ENCODE measurements at regions of chr10 and their contacts with region 1.

Region 1: DNA sequence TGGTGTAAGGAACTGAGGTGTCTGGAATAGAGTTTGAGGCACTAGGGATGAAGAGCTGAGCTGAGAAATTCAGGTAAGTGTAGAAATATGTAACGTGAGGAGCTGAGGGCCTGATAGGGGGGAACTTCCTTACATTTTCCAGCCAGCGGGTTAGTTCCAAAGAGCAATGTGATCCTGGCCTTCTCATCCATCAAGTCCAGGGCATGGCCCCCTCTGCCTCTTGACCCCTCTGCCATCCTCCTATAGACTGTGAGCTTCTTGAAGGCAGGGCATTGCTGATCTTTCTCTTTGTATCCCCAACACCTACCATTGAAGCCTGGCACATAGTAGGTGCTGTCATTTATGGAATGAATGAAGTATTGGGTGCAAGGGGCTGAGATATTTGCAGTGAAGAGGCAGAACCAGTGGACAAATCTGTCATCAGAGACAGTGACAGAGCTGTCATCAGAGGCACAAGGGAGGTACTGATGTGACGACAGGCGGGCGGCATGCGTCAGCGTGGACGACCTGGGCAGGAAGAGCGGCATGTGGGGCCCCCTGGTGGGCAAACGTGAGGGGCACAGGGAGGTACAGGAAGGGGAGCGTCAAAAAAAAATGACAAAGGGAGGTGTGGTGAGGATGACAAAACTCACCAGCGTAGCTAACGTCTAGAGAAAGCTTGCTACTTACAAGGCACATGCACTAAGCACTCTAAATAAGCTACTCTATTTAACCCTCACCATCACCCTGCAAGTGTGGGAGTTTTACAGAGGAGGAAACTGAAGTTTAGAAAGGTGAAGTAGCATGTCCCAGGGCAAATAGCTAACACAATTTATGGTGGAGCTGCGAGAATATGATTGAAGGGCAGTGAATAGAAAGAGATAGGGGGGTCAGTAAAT is 5.2 kb upstream of the CAMK2G start:
- DNase-seq: peak; percentile 89 to 98 (median 90)
- ATAC-seq: peak; percentile 96
- H3K4me3 ChIP-seq: no peak overlapping the region
- H3K27ac ChIP-seq: no peak overlapping the region
- H3K4me1 ChIP-seq: peaks cover 21 to 31% of the 10 kb centered on the region in 2 experiments; a peak in 4 of 5 replicates
- H3K27me3 ChIP-seq: no peaks in the 10 kb centered on the region
- CTCF ChIP-seq: peak; percentile 96 to 100 (median 99)
- EP300 ChIP-seq: peak; percentile 79
- POLR2A ChIP-seq: no peak
- RAD21 ChIP-seq: peak; percentile 98 to 99

Region 2: DNA sequence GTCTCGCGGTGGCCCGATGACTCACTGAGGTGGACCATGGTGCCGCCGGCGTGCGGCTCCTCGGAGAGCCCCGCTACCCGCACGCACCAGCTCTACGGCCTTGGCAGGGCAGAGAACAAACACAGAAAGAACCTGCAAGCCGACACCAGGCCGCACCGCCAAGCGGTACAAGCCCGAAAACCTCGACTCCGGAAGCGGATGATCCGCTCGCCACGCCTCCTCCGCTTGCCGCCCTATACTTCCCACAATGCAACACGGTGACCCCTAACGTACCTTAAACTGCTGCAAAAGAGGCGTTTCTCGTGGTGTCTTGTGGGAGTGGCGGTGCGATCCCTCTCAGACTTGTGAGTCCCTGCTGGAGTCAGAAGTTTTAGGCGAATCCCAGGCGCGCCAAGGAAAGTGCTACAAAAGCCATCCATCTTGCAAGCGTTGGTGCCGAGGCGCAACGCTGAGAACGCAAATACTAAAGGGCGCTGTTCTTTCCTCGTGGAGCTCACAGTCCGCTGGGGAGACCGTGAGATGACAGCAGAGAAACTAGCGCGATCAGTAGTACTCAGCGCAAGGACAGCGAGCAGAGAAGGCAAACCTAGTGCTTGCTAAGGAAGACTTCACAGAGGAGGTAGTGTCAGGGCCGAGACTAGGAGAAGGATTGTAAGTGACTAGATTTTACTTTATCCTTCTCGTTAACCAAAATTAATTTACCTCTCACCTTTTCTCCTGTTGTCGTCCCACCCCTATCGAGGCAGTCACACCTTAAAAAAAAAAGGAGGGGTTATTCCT is 626.9 kb before region 1 on chr10 and contains the start of gene MRPS16:
- CTCF ChIA-PET with region 1: no interaction called
- POLR2A ChIA-PET with region 1: no interaction called
- in situ Hi-C with region 1: loop called (anchors 5 kb)
- intact Hi-C with region 1: no loop called
- DNase-seq: peak; percentile 93 to 99 (median 95)
- ATAC-seq: peak; percentile 87
- H3K4me3 ChIP-seq: peak within 1 kb of the TSS; percentile 59
- H3K27ac ChIP-seq: peak within 1 kb of the TSS; percentile 89
- H3K4me1 ChIP-seq: peaks cover 7 to 28% of the 10 kb centered on the region in 2 experiments; a peak in 4 of 5 replicates
- H3K27me3 ChIP-seq: no peaks in the 10 kb centered on the region
- CTCF ChIP-seq: peak in 2 of 3 experiments; percentile 1 to 20; a peak in 2 of 6 replicates
- EP300 ChIP-seq: peak; percentile 52; the same call in 1 of the 2 replicates
- POLR2A ChIP-seq: peak; percentile 98
- RAD21 ChIP-seq: no peak
- polyA plus RNA-seq, gene MRPS16: 65.0 to 99.7 TPM

Region 3: DNA sequence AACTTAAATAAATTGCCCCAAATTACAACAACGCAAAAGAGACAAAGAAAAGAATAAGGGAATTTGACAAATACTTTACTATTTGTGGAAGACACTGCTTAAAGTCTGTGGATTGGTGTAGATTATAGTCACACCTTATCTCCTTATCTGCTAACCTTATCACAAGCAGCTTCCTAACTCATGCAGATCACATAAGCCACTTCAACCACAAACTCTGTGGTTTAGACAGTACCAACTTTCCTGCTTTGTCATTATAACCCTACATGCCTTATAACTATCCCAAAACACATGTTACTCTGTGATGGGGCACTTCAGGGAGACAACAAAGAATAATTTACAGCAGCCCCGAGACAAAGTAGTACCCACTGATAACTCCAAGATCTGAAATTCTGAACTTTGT is 342.2 kb before region 1 on chr10:
- CTCF ChIA-PET with region 1: no interaction called
- POLR2A ChIA-PET with region 1: no interaction called
- in situ Hi-C with region 1: loop called (anchors 10 kb)
- intact Hi-C with region 1: no loop called
- DNase-seq: peak in 1 of 4 experiments; percentile 10
- ATAC-seq: peak; percentile 47; the same call in 1 of the 3 replicates
- H3K4me3 ChIP-seq: no peak overlapping the region
- H3K27ac ChIP-seq: no peak overlapping the region
- H3K4me1 ChIP-seq: peaks cover 0 to 7% of the 10 kb centered on the region in 2 experiments; a peak in 2 of 5 replicates
- H3K27me3 ChIP-seq: no peaks in the 10 kb centered on the region
- CTCF ChIP-seq: no peak
- EP300 ChIP-seq: no peak
- POLR2A ChIP-seq: no peak
- RAD21 ChIP-seq: no peak

Region 4: DNA sequence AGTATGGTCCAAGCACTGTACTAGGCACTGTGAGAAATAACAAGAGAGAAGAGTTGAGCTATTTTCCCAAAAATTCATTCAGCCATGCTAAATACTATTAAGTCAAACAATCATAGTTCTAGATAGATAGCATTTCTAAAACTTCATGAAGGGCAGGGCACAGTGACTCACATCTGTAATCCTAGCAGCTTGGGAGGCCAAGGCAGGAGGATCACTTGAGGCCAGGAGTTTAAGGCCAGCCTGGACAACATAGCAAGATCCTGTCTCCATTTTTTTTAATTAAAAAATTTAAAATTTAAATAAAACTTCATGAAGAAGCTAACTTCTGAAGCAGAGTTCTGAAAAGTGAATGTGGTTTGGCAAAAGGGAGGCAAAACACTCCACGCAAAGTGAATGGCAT is 318.3 kb before region 1 on chr10:
- CTCF ChIA-PET with region 1: no interaction called
- POLR2A ChIA-PET with region 1: no interaction called
- in situ Hi-C with region 1: no loop called
- intact Hi-C with region 1: no loop called
- DNase-seq: no peak
- ATAC-seq: no peak
- H3K4me3 ChIP-seq: no peak overlapping the region
- H3K27ac ChIP-seq: no peak overlapping the region
- H3K4me1 ChIP-seq: no peaks in the 10 kb centered on the region
- H3K27me3 ChIP-seq: no peaks in the 10 kb centered on the region
- CTCF ChIP-seq: no peak
- EP300 ChIP-seq: no peak
- POLR2A ChIP-seq: no peak
- RAD21 ChIP-seq: no peak

Region 5: DNA sequence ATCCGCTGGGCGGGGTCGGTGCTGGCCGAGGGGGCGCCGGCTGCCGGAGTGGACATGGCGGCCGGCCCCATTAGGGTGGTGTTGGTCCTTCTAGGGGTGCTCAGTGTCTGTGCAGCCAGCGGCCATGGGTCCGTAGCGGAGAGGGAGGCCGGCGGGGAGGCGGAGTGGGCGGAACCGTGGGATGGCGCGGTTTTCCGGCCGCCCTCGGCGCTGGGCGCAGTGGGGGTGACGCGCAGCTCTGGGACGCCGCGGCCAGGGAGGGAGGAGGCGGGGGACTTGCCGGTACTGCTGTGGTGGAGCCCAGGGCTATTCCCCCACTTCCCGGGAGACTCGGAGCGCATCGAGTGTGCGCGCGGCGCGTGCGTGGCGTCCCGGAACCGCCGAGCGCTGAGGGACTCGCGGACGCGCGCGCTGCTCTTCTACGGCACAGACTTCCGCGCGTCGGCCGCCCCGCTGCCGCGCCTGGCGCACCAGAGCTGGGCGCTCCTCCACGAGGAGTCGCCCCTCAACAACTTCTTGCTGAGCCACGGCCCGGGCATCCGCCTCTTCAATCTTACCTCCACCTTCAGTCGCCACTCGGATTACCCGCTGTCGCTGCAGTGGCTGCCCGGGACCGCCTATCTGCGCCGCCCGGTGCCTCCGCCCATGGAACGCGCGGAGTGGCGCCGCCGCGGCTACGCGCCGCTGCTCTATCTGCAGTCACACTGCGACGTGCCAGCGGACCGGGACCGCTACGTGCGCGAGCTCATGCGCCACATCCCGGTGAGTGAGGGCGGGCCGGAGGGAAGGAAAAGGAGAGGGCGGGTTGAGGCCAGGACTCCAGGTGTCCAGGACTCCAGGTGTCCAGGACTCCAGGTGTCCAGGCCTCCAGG is 107.0 kb before region 1 on chr10:
- CTCF ChIA-PET with region 1: interaction called, 8 read pairs
- POLR2A ChIA-PET with region 1: interaction called, 15 read pairs
- in situ Hi-C with region 1: loop called (anchors 5 kb)
- intact Hi-C with region 1: loop called (anchors 1 kb)
- DNase-seq: peak; percentile 90 to 94 (median 92)
- ATAC-seq: peak; percentile 86
- H3K4me3 ChIP-seq: peak overlapping the region; percentile 74
- H3K27ac ChIP-seq: peak overlapping the region; percentile 91
- H3K4me1 ChIP-seq: peaks cover 21 to 29% of the 10 kb centered on the region in 2 experiments; a peak in 4 of 5 replicates
- H3K27me3 ChIP-seq: no peaks in the 10 kb centered on the region
- CTCF ChIP-seq: peak in 2 of 3 experiments; percentile 22 to 24; a peak in 3 of 6 replicates
- EP300 ChIP-seq: no peak
- POLR2A ChIP-seq: peak; percentile 97
- RAD21 ChIP-seq: peak; percentile 9 to 20; a peak in 2 of 4 replicates

Region 6: GRCh38 chr10:73803680-73804286 is 75.8 kb before region 1 on chr10:
- CTCF ChIA-PET with region 1: no interaction called
- POLR2A ChIA-PET with region 1: no interaction called
- in situ Hi-C with region 1: no loop called
- intact Hi-C with region 1: no loop called
- DNase-seq: no peak
- ATAC-seq: no peak
- H3K4me3 ChIP-seq: no peak overlapping the region
- H3K27ac ChIP-seq: no peak overlapping the region
- H3K4me1 ChIP-seq: peaks cover 3 to 21% of the 10 kb centered on the region in 2 experiments
- H3K27me3 ChIP-seq: no peaks in the 10 kb centered on the region
- CTCF ChIP-seq: no peak
- EP300 ChIP-seq: no peak
- POLR2A ChIP-seq: no peak
- RAD21 ChIP-seq: no peak

Region 7: DNA sequence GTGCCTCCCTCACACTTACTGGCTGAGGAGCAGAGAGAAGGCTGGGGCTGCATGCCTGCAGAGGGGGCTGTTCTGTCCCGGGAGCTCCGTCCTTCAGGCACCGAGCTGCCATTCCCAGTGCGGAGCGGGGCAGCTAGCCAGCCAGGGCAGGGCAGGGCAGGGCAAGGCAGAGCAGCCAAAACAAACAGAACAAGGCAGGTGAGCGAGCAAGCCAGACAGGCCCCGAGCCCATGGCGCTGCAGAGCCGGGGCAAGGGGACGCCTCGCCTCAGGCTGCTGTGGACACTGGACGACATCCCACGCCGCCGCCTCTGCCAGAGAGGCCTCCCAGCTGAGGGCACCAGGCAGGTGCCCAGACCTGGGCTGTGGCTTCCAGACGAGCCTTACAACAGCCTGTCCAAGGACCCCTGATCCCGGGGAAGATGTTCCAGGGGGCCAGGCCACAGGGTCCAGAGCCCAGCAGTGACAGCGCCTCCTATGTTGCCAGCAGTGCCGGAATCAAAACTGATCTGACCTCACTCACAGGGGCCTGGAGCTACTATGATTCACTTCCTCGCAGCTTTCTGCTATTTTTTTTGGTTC is 59.9 kb before region 1 on chr10:
- CTCF ChIA-PET with region 1: no interaction called
- POLR2A ChIA-PET with region 1: no interaction called
- in situ Hi-C with region 1: no loop called
- intact Hi-C with region 1: no loop called
- DNase-seq: peak in 1 of 4 experiments; percentile 30
- ATAC-seq: 0 out of 3 replicates have a peak, but pooled peaks have one; percentile 10
- H3K4me3 ChIP-seq: no peak overlapping the region
- H3K27ac ChIP-seq: no peak overlapping the region
- H3K4me1 ChIP-seq: peaks cover 44 to 48% of the 10 kb centered on the region in 2 experiments
- H3K27me3 ChIP-seq: no peaks in the 10 kb centered on the region
- CTCF ChIP-seq: peak in 2 of 3 experiments; percentile 9 to 11; a peak in 2 of 6 replicates
- EP300 ChIP-seq: no peak
- POLR2A ChIP-seq: no peak
- RAD21 ChIP-seq: no peak

Region 8: GRCh38 chr10:73848821-73849489 is 30.6 kb before region 1 on chr10:
- CTCF ChIA-PET with region 1: interaction called, 41 read pairs
- POLR2A ChIA-PET with region 1: interaction called, 8 read pairs
- in situ Hi-C with region 1: loop called (anchors 5 kb)
- intact Hi-C with region 1: loop called (anchors 1 kb)
- DNase-seq: peak; percentile 90 to 95 (median 92)
- ATAC-seq: peak; percentile 98
- H3K4me3 ChIP-seq: no peak overlapping the region
- H3K27ac ChIP-seq: no peak overlapping the region
- H3K4me1 ChIP-seq: peaks cover 0 to 11% of the 10 kb centered on the region in 2 experiments; a peak in 2 of 5 replicates
- H3K27me3 ChIP-seq: no peaks in the 10 kb centered on the region
- CTCF ChIP-seq: peak; percentile 97 to 99 (median 99)
- EP300 ChIP-seq: no peak
- POLR2A ChIP-seq: no peak
- RAD21 ChIP-seq: peak; percentile 99

Region 9: GRCh38 chr10:74071157-74071556 is 191.6 kb after region 1 on chr10:
- CTCF ChIA-PET with region 1: no interaction called
- POLR2A ChIA-PET with region 1: no interaction called
- in situ Hi-C with region 1: no loop called
- intact Hi-C with region 1: no loop called
- DNase-seq: no peak
- ATAC-seq: no peak
- H3K4me3 ChIP-seq: no peak overlapping the region
- H3K27ac ChIP-seq: no peak overlapping the region
- H3K4me1 ChIP-seq: peaks cover 6 to 9% of the 10 kb centered on the region in 2 experiments; a peak in 4 of 5 replicates
- H3K27me3 ChIP-seq: no peaks in the 10 kb centered on the region
- CTCF ChIP-seq: no peak
- EP300 ChIP-seq: no peak
- POLR2A ChIP-seq: no peak
- RAD21 ChIP-seq: no peak

Region 10: GRCh38 chr10:74234569-74234968 is 355.0 kb after region 1 on chr10:
- CTCF ChIA-PET with region 1: interaction called, 12 read pairs
- POLR2A ChIA-PET with region 1: no interaction called
- in situ Hi-C with region 1: loop called (anchors 10 kb)
- intact Hi-C with region 1: no loop called
- DNase-seq: no peak
- ATAC-seq: no peak
- H3K4me3 ChIP-seq: no peak overlapping the region
- H3K27ac ChIP-seq: no peak overlapping the region
- H3K4me1 ChIP-seq: peaks cover 5 to 14% of the 10 kb centered on the region in 2 experiments; a peak in 4 of 5 replicates
- H3K27me3 ChIP-seq: no peaks in the 10 kb centered on the region
- CTCF ChIP-seq: peak in 1 of 3 experiments; percentile 64; a peak in 2 of 6 replicates
- EP300 ChIP-seq: no peak
- POLR2A ChIP-seq: no peak
- RAD21 ChIP-seq: peak; percentile 47 to 73